ENCODE measurements at regions of chr10 and their contacts with region 1.

Region 1: GRCh38 chr10:101060036-101060950 is 1.5 kb upstream of the KAZALD1 start:
- DNase-seq: peak; percentile 84
- H3K4me3 Mint-ChIP-seq: peak overlapping the region; percentile 92
- H3K27ac Mint-ChIP-seq: peak overlapping the region; percentile 91
- H3K4me1 Mint-ChIP-seq: peaks cover 33% of the 10 kb centered on the region
- H3K27me3 Mint-ChIP-seq: peaks cover 22% of the 10 kb centered on the region

Region 2: DNA sequence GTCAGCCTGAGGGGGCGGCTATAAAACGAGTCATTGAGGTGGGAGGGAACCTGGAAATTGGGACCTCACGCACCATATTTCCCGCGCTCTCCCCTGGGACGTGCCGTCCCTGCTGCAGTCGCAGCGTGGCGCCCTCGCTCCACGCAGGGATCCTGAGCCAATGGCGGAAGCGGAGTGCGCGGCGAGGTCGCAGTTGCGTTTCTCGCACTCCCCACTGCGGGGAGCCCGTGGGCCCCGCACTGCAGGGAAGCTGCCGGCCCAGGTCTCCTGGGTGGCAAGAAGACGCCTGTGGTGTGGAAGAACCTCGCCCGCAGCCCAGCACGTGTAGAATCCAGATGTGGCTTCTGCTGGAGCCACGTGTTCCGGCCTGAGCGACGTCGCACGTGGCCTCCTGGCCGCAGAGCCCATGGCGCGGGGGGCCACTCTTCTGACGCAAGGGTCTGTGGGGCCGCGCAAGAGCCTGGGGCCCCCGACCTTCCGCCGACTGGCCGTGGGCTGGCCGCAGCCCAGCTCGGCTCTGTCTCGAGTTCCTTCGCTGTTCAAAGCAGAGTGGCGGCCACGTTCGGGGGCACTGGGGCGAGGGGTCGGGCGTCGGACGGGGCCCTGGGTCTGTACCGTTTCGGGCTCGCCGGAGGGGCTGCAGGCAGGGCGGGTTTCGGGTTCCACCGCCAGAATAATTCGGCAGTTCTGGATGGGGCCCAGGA is 498.1 kb before region 1 on chr10:
- intact Hi-C with region 1: no loop called
- DNase-seq: peak; percentile 72
- H3K4me3 Mint-ChIP-seq: no peak overlapping the region
- H3K27ac Mint-ChIP-seq: no peak overlapping the region
- H3K4me1 Mint-ChIP-seq: peaks cover 6% of the 10 kb centered on the region
- H3K27me3 Mint-ChIP-seq: peaks cover 34% of the 10 kb centered on the region

Region 3: DNA sequence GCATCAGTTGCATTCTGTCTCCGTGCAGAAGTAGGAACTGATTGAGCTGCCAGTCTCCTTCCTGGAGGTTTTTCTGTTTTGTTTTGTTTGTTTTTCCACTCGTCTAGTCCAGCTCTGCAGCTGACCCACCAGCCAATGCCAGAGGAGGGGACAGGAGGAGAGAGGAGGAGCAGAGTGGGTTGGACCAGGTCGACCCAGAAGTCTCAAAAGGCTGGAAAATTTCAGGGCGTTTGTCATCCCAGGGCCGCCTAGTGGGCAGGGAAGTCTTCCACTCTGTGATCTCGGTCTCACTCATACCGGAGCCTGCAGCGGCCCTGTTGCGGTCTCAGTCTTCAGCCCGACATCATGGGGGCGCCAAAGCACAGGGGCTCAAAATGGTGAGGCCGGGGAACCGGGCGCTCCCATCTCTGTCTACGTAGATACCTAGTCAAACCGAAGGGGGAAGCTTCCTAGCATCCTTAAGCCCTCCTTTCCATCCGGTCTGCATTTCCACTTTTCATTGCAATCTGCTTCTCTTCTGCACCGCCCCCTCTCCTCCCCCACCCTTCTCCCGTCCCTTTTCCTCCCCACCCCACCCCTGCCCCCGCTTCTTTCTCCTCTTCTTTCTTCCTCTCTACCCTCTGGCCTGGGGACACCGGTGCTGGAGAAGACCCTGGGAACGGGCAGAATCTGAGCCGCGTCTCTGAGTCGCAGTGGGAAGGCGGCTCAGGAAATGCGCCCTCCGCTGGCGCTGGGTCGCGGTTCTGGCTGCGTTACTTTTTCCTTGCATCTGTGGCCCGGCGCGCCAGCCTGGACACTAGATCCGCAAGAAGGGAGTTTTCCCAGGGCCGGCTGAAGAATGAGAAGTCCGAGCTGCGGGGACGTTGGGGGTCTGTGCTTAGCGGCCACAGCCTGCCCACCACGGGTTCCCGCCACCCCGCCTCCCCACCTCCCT is 331.1 kb before region 1 on chr10:
- intact Hi-C with region 1: loop called (anchors 10 kb)
- DNase-seq: no peak
- H3K4me3 Mint-ChIP-seq: no peak overlapping the region
- H3K27ac Mint-ChIP-seq: no peak overlapping the region
- H3K4me1 Mint-ChIP-seq: peaks cover 24% of the 10 kb centered on the region
- H3K27me3 Mint-ChIP-seq: peaks cover 89% of the 10 kb centered on the region

Region 4: DNA sequence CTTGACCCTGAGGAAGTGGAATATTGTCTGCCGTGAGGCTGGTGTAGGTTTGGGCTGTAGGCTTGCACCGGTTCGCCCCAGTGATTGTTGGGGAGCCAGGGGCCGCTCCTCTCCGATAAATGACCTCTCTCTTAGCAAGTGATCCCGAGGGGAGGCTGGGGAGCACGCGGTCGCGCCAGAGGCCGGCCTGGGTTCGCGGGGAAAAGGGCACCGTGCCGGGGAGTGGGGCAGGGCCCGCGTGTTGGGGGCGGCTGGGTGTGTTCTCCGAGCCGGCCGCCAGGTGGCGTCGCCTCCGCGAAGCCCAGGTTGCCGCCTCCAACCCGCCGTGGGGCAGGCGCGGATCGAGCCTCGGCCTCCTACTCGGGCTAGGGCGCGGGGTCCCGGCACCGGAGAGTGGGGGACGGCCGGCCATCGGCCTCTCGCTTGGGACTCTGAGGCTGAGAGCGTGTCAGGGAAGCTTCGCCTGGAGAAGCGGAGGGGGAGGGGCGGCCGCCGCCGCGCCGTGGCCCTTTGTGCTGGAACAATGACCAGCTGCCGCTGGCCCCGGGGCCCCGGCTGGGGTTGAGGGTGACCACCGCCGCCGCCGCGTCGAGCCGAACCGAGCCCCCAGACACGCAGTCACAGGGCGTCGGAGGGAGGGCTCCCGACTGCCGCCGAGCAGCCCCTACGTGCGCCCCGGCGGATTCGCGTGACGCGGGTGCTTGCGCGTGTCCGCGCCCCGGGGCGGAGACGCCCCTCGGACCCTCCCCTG is 61.1 kb before region 1 on chr10:
- intact Hi-C with region 1: loop called (anchors 1 kb)
- DNase-seq: peak; percentile 77
- H3K4me3 Mint-ChIP-seq: peak overlapping the region; percentile 88
- H3K27ac Mint-ChIP-seq: peak overlapping the region; percentile 93
- H3K4me1 Mint-ChIP-seq: peaks cover 29% of the 10 kb centered on the region
- H3K27me3 Mint-ChIP-seq: peaks cover 4% of the 10 kb centered on the region

Region 5: GRCh38 chr10:101042667-101043355 is 17.5 kb before region 1 on chr10:
- intact Hi-C with region 1: loop called (anchors 1 kb)
- DNase-seq: peak; percentile 85
- H3K4me3 Mint-ChIP-seq: peak overlapping the region; percentile 91
- H3K27ac Mint-ChIP-seq: peak overlapping the region; percentile 84
- H3K4me1 Mint-ChIP-seq: peaks cover 27% of the 10 kb centered on the region
- H3K27me3 Mint-ChIP-seq: peaks cover 20% of the 10 kb centered on the region

Region 6: GRCh38 chr10:101120884-101121653 is 60.8 kb after region 1 on chr10:
- intact Hi-C with region 1: loop called (anchors 5 kb)
- DNase-seq: no peak
- H3K4me3 Mint-ChIP-seq: peak overlapping the region; percentile 88
- H3K27ac Mint-ChIP-seq: peak overlapping the region; percentile 78
- H3K4me1 Mint-ChIP-seq: peaks cover 33% of the 10 kb centered on the region
- H3K27me3 Mint-ChIP-seq: peaks cover 80% of the 10 kb centered on the region

Region 7: DNA sequence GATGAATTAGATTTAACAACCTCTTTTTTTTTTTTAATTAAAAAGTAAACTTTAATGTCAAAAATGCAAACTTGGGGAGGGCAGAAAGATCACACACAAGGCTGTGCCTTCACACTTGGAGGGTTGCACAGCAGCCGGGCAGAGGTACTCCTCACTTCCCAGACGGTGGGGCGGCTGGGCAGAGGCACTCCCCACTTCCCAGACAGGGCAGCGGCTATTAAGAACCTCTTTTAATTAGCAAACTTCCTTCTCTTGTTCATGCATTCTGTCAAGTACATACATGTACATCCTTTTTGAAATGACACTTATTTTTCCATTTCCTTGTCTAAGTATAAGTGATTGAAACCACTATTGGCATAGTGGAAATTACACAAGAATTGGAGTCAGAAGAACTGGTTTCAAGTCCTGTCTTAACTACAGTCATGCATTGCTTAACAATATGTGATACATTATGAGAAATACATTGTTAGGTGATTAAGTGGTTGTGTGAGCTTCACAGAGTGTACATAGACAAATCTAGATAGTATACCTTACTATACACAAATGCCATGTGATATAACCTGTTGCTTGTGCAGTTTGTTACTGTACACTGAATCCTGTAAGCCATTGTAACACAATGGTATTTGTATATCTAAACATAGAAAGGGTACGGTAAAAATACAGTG is 320.2 kb after region 1 on chr10:
- intact Hi-C with region 1: no loop called
- DNase-seq: no peak
- H3K4me3 Mint-ChIP-seq: no peak overlapping the region
- H3K27ac Mint-ChIP-seq: peak overlapping the region; percentile 84
- H3K4me1 Mint-ChIP-seq: peaks cover 9% of the 10 kb centered on the region
- H3K27me3 Mint-ChIP-seq: no peaks in the 10 kb centered on the region

Measured in activated T-helper 1 cell treated with anti-CD3 and anti-CD28 coated beads, Interleukin-12 subunit alpha, Interleukin-12 subunit beta, Interleukin-2, Interleukin-4 antibody, amounts not matched to agents 30 ng/mL and 10 ng/mL and 1 ng/mL, durations not matched to agents 14 hours and 24 hours and 36 hours (primary cell).